PC-3 (cell line): ENCODE measurements at regions of chr2 and their contacts with region 1.

Region 1: GRCh38 chr2:225223301-225223700 is 176.2 kb upstream of the NYAP2 start:
- DNase-seq: peak; percentile 76
- ATAC-seq: peak; percentile 96
- H3K4me3 ChIP-seq: no peak overlapping the region; the same call in 1 of the 2 replicates
- H3K27ac ChIP-seq: peak overlapping the region; percentile 88
- H3K4me1 ChIP-seq: peaks cover 19% of the 10 kb centered on the region
- H3K27me3 ChIP-seq: no peaks in the 10 kb centered on the region
- CTCF ChIP-seq: no peak

Region 2: DNA sequence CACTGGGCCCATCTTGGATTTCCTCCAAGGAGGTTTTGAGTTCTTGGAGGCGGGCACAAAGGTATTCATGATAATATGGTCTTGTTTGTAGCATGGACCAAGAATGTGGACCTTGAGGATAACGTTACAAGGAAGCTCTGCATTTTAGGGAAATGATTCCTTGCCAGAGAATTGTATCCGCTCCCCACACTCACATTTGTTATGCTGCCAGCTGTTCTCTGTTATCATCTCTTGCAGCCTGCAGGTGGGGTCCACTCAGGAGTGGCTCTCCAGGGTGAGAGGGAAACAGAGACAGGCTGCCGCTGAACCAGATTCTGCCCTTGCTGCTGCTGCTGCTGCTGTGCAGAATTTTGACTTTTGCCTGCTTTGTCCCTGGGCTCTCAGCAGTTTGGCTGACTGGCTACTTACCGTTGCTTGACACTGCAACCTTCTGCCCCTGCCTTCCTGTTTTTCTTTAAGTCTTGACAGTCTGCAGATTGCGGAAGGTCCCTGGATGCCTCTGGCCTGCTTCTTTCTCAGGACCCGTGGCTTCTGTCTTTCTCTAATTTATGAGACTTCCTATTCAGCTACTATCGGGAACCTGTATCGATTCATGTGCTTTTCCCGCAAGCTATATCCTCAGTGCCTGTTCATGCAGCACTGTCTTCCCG is 58.8 kb before region 1 on chr2:
- CTCF ChIA-PET with region 1: no interaction called
- POLR2A ChIA-PET with region 1: no interaction called
- intact Hi-C with region 1: loop called (anchors 5 kb)
- DNase-seq: no peak
- ATAC-seq: no peak
- H3K4me3 ChIP-seq: no peak overlapping the region
- H3K27ac ChIP-seq: peak overlapping the region; percentile 3; the same call in 1 of the 2 replicates
- H3K4me1 ChIP-seq: peaks cover 11% of the 10 kb centered on the region; the same call in 1 of the 2 replicates
- H3K27me3 ChIP-seq: no peaks in the 10 kb centered on the region
- CTCF ChIP-seq: no peak

Region 3: DNA sequence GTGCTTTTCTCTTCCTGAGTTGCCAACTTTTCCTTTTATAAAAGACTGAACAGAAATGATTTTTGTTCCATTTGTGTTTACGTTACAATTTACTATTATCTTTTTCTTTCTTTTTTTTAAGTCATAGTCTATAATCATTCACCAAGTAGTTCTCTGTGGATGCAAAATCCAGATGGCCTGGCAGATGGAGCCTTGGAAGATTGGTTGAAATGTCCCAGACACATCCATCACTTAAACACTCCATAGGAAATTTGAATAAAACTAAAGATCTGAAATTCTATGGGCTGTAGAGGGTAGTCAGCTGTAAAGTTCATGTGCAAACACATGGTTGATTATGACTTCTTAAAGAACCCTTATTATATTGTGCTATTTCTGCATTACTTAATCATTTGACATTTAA is 16.3 kb before region 1 on chr2:
- CTCF ChIA-PET with region 1: no interaction called
- POLR2A ChIA-PET with region 1: no interaction called
- intact Hi-C with region 1: no loop called
- DNase-seq: no peak
- ATAC-seq: no peak
- H3K4me3 ChIP-seq: no peak overlapping the region
- H3K27ac ChIP-seq: no peak overlapping the region
- H3K4me1 ChIP-seq: no peaks in the 10 kb centered on the region
- H3K27me3 ChIP-seq: no peaks in the 10 kb centered on the region
- CTCF ChIP-seq: no peak

Region 4: GRCh38 chr2:225270861-225271260 is 47.6 kb after region 1 on chr2:
- CTCF ChIA-PET with region 1: no interaction called
- POLR2A ChIA-PET with region 1: no interaction called
- intact Hi-C with region 1: loop called (anchors 5 kb)
- DNase-seq: peak; percentile 83
- ATAC-seq: peak; percentile 95
- H3K4me3 ChIP-seq: no peak overlapping the region
- H3K27ac ChIP-seq: no peak overlapping the region
- H3K4me1 ChIP-seq: peaks cover 12% of the 10 kb centered on the region
- H3K27me3 ChIP-seq: no peaks in the 10 kb centered on the region
- CTCF ChIP-seq: peak; percentile 27; the same call in 1 of the 2 replicates